ENCODE measurements at regions of chr2 and their contacts with region 1.

Region 1: GRCh38 chr2:85939131-85939530 is 50.3 kb upstream of the ST3GAL5 start:
- DNase-seq: no peak
- H3K4me3 ChIP-seq: no peak overlapping the region
- H3K27ac ChIP-seq: no peak overlapping the region
- H3K4me1 ChIP-seq: peaks cover 0 to 3% (median 1%) of the 10 kb centered on the region in 4 experiments
- H3K27me3 ChIP-seq: no peaks in the 10 kb centered on the region

Region 2: DNA sequence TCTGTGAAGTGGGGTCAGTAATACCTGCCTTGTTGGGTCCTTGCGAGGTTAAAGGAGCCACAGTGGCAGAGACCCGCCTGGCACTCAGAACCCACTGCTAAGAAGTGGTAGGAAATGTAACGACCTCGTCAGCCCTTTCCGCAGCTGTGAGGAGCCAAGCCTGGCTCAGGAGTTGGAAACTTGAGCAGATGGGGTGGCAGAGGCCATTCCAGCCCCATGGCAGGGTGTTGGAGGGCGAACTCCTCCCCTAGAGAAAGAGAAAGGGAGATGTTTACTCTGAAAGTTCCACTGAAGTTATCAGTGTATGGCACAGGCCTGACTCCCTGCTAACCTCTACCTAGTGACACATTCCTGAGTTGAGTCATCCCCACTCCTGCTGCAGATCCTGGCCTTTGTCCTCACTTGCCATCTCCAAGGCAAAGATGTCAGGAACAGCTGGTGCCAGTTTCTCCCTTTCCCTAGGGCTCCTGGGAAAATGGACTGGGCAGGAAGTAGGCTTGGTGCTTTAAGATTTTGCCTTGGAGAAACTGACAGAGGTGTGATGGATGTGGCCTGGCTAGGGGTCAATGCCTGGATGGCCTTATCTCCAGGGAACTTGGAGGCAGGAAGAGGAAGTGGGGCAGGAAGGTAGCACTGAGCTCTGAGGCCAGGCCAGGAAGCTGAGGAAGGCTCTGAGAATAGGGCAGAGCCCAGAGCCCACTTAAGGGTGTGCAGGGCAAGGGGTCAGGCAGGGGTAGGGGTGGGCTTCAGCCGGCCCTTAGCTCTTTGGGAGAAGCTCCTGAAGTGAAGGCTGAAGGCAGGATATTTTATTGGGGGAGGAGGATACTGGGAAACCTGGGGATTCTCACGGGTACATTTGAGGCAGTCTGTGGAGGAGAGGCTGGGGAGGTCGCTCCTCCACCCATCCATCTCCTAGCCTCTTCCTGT is 354.0 kb before region 1 on chr2:
- CTCF ChIA-PET with region 1: no interaction called
- POLR2A ChIA-PET with region 1: no interaction called
- DNase-seq: peak in 2 of 3 donors; percentile 47 to 59
- H3K4me3 ChIP-seq: peak overlapping the region; percentile 0 to 81 (median 60)
- H3K27ac ChIP-seq: peak overlapping the region; percentile 66 to 79
- H3K4me1 ChIP-seq: peaks cover 13 to 76% (median 69%) of the 10 kb centered on the region in 4 experiments
- H3K27me3 ChIP-seq: no peaks in the 10 kb centered on the region

Region 3: DNA sequence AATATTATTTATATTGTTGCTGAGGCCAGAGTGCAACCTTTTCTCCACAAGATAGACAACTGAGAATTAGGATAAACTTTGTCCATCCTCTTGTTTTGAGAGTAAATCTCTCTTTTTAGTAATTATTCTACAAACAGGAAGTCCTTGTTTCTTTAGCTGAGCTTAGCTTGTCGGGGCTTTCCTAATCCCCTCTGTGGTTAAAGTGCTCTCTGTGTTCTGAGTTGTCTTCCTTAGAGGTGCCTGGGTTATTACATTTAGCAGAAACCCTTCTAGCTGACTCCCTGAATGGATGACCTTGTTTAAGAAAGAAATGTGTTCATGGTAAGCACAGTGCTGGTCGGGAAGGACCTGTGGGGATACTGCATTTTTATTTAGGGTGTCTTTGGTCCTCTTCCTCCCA is 310.5 kb before region 1 on chr2:
- CTCF ChIA-PET with region 1: no interaction called
- POLR2A ChIA-PET with region 1: no interaction called
- DNase-seq: peak in 1 of 3 donors; percentile 17
- H3K4me3 ChIP-seq: no peak overlapping the region
- H3K27ac ChIP-seq: peak overlapping the region in 1 of 2 experiments; percentile 34
- H3K4me1 ChIP-seq: no peaks in the 10 kb centered on the region
- H3K27me3 ChIP-seq: no peaks in the 10 kb centered on the region

Region 4: DNA sequence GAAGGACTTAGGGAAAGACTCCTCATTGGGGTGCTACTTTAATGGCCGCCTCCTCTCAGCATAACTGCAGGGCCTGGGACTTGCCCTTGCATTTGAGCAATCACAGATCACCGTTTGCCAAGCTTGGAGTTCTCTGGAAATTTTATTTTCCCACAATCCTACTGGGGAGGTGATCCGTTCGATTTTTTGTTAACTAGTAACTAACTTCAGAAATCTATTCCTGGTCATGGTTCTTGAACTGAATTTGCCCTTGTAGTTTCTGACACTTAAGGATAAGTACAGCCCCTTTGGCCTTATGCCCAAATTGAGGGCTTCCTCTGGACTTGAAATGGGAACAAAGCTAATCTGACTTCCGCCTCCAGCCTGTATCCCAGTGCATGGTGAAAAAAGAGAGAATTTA is 10.1 kb after region 1 on chr2:
- CTCF ChIA-PET with region 1: interaction called, 13 read pairs
- POLR2A ChIA-PET with region 1: no interaction called
- DNase-seq: peak; percentile 7 to 19 (median 17)
- H3K4me3 ChIP-seq: no peak overlapping the region
- H3K27ac ChIP-seq: no peak overlapping the region
- H3K4me1 ChIP-seq: peaks cover 0 to 7% (median 3%) of the 10 kb centered on the region in 4 experiments
- H3K27me3 ChIP-seq: no peaks in the 10 kb centered on the region

Region 5: DNA sequence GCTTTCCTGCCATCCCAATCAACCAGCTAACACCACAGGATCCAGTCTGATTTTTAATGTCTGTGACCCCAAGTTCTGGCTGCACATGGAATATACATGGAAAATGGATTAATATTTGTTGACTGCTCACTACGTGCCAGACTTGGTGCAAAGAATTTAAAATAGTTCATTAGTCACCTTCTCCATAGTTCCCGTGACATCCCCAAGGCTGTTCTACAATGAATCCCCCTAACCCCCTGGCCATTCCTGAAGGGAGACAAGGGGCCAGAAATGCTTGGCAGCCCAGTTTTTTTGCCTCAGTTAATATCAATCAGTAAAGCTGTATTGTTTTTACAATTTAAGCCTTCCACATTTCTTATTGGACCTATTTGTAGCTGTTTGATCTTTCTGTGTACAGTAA is 20.7 kb after region 1 on chr2:
- CTCF ChIA-PET with region 1: no interaction called
- POLR2A ChIA-PET with region 1: no interaction called
- DNase-seq: no peak
- H3K4me3 ChIP-seq: no peak overlapping the region
- H3K27ac ChIP-seq: no peak overlapping the region
- H3K4me1 ChIP-seq: peaks cover 0 to 5% (median 0%) of the 10 kb centered on the region in 4 experiments
- H3K27me3 ChIP-seq: no peaks in the 10 kb centered on the region

Region 6: DNA sequence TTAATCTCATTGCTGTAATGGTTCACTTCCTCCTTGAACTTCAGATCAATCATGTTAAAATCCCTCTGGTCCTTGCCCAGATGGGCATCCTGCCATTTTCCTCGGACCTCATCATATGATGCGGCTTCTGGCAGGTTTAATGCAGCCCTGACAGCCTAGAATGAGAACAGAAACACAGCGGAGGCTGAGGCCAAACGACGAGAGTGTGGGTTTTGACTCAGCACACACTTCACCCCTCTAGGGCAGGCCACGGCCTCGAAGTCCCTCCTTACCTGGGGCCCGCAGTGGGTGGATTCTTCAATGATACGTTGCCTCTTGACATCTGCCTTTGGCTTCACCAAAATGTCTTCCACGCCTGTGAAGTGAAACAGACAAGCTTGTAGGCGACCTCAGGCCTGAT is 109.8 kb after region 1 on chr2:
- CTCF ChIA-PET with region 1: no interaction called
- POLR2A ChIA-PET with region 1: no interaction called
- DNase-seq: no peak
- H3K4me3 ChIP-seq: no peak overlapping the region
- H3K27ac ChIP-seq: no peak overlapping the region
- H3K4me1 ChIP-seq: no peaks in the 10 kb centered on the region
- H3K27me3 ChIP-seq: no peaks in the 10 kb centered on the region